Heart right ventricle (tissue), 16 donors: ENCODE measurements at regions of chr20 and their contacts with region 1.

Region 1: DNA sequence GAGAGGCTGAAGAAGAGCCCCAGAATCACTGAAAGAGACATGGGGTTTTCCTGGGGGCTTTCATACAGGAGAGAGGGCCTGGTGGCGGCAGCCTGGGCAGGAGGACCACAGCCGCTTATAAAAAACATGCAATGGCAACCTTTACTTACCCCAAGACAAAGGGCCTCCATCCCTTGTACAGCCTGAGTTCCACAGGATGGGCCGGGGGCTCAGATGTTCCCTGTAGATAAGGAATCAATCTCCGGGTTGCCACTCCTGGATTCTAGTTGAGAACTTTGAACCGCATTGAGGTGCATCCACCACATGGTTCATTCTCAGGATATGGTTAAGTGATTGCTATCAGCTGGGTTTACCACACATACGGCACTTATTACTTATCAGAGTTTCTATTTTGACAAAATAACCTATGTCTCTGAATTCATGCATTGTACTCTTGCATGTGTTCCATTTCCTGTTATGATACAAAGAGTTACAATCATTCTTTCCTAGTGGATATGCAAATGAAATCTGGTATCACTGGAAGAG is 677.6 kb downstream of the KIF16B start:
- DNase-seq: no peak
- ATAC-seq: no peak
- H3K4me3 ChIP-seq: no peak overlapping the region
- H3K27ac ChIP-seq: no peak overlapping the region
- H3K4me1 ChIP-seq: no peaks in the 10 kb centered on the region
- H3K27me3 ChIP-seq: no peaks in the 10 kb centered on the region
- CTCF ChIP-seq: no peak

Region 2: GRCh38 chr20:14657266-14658005 is 1238.2 kb before region 1 on chr20:
- intact Hi-C with region 1: loop called in 1 of 10 experiments (anchors 10 kb)
- DNase-seq: no peak
- ATAC-seq: peak in 1 of 8 donors; percentile 33
- H3K4me3 ChIP-seq: no peak overlapping the region
- H3K27ac ChIP-seq: no peak overlapping the region
- H3K4me1 ChIP-seq: no peaks in the 10 kb centered on the region
- H3K27me3 ChIP-seq: no peaks in the 10 kb centered on the region
- CTCF ChIP-seq: no peak